ENCODE measurements at regions of chr10 and their contacts with region 1.

Region 1: GRCh38 chr10:89217057-89217990 is 10.2 kb upstream of the CH25H start:
- DNase-seq: peak; percentile 42
- CTCF ChIP-seq: peak; percentile 61

Region 2: GRCh38 chr10:88565072-88565471 is 652.3 kb before region 1 on chr10:
- CTCF ChIA-PET with region 1: interaction called, 10 read pairs
- POLR2A ChIA-PET with region 1: no interaction called
- DNase-seq: peak; percentile 24
- CTCF ChIP-seq: peak; percentile 40

Region 3: DNA sequence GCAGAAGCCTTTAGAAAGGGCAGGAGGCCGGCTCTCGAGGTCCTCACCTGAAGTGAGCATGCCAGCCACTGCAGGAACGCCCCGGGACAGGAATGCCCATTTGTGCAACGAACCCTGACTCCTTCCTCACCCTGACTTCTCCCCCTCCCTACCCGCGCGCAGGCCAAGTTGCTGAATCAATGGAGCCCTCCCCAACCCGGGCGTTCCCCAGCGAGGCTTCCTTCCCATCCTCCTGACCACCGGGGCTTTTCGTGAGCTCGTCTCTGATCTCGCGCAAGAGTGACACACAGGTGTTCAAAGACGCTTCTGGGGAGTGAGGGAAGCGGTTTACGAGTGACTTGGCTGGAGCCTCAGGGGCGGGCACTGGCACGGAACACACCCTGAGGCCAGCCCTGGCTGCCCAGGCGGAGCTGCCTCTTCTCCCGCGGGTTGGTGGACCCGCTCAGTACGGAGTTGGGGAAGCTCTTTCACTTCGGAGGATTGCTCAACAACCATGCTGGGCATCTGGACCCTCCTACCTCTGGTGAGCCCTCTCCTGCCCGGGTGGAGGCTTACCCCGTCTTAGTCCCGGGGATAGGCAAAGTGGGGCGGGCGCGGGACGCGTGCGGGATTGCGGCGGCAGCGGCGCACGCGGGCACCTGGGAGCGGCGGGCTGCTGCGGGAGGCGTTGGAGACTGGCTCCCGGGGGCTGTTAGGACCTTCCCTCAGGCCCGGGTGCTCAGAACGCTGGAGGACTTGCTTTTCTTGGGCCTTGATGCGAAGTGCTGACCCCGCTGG is 226.8 kb before region 1 on chr10 and contains the start of gene FAS:
- CTCF ChIA-PET with region 1: interaction called, 11 read pairs
- POLR2A ChIA-PET with region 1: interaction called, 4 read pairs
- DNase-seq: peak; percentile 79
- CTCF ChIP-seq: no peak

Region 4: GRCh38 chr10:89022734-89023133 is 194.6 kb before region 1 on chr10:
- CTCF ChIA-PET with region 1: interaction called, 11 read pairs
- POLR2A ChIA-PET with region 1: no interaction called
- DNase-seq: no peak
- CTCF ChIP-seq: no peak

Region 5: GRCh38 chr10:89035076-89035860 is 182.1 kb before region 1 on chr10:
- CTCF ChIA-PET with region 1: interaction called, 67 read pairs
- POLR2A ChIA-PET with region 1: no interaction called
- DNase-seq: no peak
- CTCF ChIP-seq: no peak

Region 6: DNA sequence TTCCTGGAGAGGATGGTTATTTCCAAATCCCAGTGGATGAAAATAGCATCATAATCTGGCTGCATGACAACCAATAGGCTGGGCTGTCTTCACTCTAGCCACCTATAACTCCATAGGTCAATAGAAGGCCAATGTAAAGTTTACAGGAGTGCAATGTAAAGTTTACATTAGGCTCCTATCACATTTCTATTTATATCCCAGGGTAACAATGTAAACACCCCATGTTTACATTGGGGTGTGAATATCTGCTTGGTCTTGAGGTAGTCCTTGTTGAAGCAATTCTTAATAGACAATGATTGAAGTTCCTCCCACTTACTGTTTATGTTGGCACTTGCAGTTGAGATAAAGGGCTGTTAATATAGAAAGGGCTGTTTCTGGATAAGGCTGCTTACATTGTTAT is 31.7 kb before region 1 on chr10:
- CTCF ChIA-PET with region 1: no interaction called
- POLR2A ChIA-PET with region 1: no interaction called
- DNase-seq: no peak
- CTCF ChIP-seq: no peak

Region 7: DNA sequence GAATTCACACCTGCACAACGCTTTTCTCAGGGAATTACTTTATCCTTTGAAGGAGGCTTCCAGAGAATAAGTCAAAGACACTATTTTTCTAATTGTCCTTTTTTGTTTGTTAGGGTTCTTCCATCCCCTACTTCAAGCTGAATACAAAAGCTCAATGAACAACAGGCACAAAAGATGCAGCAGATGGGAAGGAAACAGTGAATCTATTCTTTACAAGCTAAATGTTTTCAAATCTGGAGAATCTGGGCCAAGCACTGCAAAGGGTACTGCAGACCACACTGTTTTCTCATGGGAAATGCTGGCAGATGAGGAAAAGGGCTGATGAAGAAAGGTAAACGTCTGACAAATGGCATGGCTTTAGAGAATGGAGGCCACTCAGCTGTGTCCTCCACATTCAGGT is 15.7 kb after region 1 on chr10:
- CTCF ChIA-PET with region 1: interaction called, 54 read pairs
- POLR2A ChIA-PET with region 1: no interaction called
- DNase-seq: no peak
- CTCF ChIP-seq: no peak

Measured in GM10248 (cell line).